Activated CD8-positive, alpha-beta memory T cell treated with anti-CD3 and anti-CD28 coated beads, Interleukin-2, amount 10 ng/mL, durations not matched to agents 7 days and 5 days (primary cell): ENCODE measurements at regions of chr11 and their contacts with region 1.

Region 1: DNA sequence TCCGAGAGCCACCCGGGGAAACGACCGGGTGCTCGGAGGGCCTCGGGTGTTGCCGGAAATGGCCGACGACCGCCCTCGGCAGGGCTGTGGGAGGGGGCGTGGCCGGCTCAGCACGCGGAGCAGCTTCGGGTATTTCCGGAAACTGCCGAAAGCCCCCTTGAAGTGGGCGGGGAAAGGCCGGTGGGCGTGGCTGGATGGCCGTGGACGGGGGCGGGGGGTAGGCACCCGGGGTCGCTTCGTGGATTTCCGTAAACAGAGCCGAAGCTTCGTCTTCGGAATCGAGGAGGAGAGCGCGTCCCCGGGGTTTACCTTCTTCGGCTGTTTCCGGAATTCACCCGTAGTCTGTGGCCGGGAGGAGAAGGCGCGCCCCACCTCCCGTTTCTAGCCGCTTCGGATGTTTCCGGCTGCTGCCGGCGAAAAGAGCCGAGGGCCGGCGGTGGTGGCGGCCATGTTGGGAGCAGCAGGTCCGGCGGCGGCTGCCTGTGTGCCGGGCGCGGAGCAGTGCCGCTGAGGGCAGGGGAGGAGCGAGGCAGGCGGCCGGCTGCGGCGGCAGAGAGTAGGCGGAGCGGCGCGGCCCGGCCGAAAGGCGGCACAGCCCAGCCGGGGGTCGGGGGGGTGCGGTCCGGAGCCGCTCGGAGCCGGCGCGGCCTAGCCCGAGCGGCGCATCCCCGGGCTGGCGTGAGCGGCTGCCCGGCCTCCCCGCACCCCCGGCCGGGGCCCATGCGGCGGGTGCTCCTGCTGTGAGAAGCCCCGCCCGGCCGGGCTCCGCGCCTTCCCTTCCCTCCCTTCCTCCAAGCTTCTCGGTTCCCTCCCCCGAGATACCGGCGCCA is at the start of gene MARK2:
- DNase-seq: peak; percentile 99
- ATAC-seq: peak; percentile 89
- H3K4me3 Mint-ChIP-seq: peak within 1 kb of the TSS; percentile 85
- H3K27ac Mint-ChIP-seq: peak within 1 kb of the TSS; percentile 88
- H3K4me1 Mint-ChIP-seq: peaks cover 55% of the 10 kb centered on the region
- H3K27me3 Mint-ChIP-seq: no peaks in the 10 kb centered on the region
- total RNA-seq, gene MARK2: 57.2 to 57.9 TPM

Region 2: DNA sequence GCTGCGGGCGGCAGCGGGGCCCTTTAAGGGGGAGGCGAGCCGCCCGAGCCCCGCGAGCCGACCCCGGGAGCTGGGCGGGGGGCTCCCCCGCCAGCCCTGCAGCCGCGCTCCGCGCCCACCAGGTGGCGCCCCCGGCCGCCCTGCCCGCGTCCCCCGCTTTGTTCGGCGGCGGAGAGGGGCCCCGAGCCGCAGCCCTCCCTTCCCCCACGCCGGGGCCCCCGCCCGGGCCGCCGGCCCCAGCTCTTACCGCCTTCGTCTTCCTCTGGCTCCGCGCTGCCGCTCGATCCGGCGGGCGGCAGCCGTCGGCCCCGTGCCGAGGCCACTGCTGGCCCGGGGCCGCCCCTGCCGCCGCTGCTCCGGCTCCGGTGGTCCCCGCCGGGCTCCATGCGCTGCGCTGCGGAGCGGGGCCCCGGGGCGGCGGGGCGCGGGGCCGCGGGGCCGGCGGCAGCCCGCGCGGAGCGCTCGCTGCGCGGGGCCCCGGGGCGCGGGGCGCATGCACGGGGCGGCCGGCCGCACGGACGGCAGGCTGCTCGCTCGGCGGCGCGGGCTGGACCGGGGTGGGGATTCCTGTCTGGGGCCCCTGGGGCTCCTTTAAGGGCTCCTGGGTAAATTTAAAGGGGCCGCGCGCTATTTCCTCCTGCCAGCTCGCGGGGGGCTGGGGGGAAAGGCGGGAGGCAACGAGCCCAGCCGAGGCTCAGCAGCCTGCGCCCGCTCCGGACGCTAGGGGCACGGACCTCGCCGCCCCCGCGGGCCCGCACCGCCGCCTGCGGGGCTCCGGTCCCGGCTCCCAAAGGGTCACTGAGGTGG is 70.5 kb before region 1 on chr11 and contains the start of gene ZFTA:
- CTCF ChIA-PET with region 1: interaction called, 19 read pairs
- DNase-seq: peak; percentile 61
- ATAC-seq: peak; percentile 68
- H3K4me3 Mint-ChIP-seq: peak within 1 kb of the TSS; percentile 87
- H3K27ac Mint-ChIP-seq: peak within 1 kb of the TSS; percentile 70
- H3K4me1 Mint-ChIP-seq: peaks cover 15% of the 10 kb centered on the region
- H3K27me3 Mint-ChIP-seq: peaks cover 29% of the 10 kb centered on the region
- total RNA-seq, gene ZFTA: 2.6 to 4.2 TPM

Region 3: DNA sequence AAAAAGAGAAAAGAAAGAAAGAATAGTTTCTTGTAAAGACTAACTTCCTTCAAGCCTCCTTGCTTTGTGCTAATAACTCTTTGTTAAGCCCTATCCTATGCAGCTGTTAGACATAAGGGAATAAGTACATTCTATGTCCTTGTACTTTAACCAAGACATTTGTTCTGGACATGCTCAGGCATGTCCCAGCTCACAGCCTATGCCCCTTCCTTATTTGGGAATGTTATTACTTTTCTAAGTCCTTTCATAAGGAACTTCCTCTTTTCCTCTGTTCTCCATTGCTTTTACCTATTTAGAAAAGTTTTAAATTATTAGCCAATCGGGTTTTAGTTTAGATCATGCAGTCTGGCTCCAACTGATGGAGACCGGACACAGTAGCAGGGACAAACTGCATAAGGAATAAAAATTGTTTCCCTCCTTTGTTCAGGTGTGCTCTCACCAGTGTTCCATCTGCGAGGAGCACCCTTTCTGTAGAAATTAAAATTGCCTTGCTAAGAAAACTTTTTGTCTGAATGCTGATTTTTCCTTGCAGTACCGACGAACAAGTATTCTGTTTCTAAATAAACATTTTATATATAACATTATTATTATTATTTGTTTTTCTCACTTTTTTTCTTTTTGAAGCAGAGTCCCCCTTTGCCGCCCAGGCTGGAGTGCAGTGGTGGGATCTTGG is 47.3 kb before region 1 on chr11:
- CTCF ChIA-PET with region 1: no interaction called
- DNase-seq: no peak
- ATAC-seq: no peak
- H3K4me3 Mint-ChIP-seq: no peak overlapping the region
- H3K27ac Mint-ChIP-seq: no peak overlapping the region
- H3K4me1 Mint-ChIP-seq: no peaks in the 10 kb centered on the region
- H3K27me3 Mint-ChIP-seq: peaks cover 6% of the 10 kb centered on the region

Region 4: DNA sequence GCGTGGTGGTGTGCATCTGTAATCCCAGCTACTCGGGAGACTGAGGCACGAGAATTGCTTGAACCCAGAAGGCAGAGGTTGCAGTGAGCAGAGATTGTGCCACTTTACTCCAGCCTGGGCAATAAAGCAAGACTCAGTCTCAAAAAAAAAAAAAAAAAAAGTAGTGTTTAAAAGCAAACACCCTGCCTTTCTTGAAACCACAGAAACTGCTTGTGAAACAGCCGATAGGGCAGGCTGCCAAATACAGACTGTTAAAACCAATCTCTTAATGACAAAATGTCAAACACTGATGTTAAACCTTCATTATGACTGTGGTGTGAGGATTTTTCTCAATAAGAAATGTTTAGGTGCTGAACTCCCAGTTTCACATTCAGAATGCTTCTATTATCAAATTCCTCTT is 27.3 kb after region 1 on chr11:
- CTCF ChIA-PET with region 1: interaction called, 44 read pairs
- DNase-seq: peak; percentile 89
- ATAC-seq: peak; percentile 80
- H3K4me3 Mint-ChIP-seq: peak overlapping the region; percentile 30
- H3K27ac Mint-ChIP-seq: peak overlapping the region; percentile 71
- H3K4me1 Mint-ChIP-seq: peaks cover 76% of the 10 kb centered on the region
- H3K27me3 Mint-ChIP-seq: no peaks in the 10 kb centered on the region

Region 5: DNA sequence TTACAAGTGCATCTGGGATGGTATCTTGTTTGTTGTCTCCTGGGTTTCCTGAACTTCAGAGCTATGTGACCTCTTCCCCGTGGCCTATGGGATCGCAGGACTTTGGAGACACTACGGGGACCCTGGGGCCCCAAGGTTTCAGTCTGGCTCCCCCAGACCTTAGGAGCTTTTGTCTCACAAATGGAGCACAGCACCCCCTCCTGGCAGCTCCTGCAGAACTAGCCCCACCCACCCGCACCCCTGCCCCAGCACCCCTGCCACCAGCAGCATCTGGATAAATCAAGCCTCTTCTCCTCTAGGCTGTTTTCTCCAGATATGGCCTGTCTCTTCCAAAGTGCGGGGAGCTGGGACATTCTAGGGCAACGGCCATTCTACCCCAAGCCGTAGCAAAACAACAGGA is 67.7 kb after region 1 on chr11:
- CTCF ChIA-PET with region 1: interaction called, 36 read pairs
- DNase-seq: peak; percentile 55
- ATAC-seq: peak; percentile 44
- H3K4me3 Mint-ChIP-seq: no peak overlapping the region
- H3K27ac Mint-ChIP-seq: no peak overlapping the region
- H3K4me1 Mint-ChIP-seq: no peaks in the 10 kb centered on the region
- H3K27me3 Mint-ChIP-seq: no peaks in the 10 kb centered on the region

Region 6: GRCh38 chr11:63945477-63946163 is 106.7 kb after region 1 on chr11:
- CTCF ChIA-PET with region 1: interaction called, 136 read pairs
- DNase-seq: peak; percentile 68
- ATAC-seq: peak; percentile 76
- H3K4me3 Mint-ChIP-seq: no peak overlapping the region
- H3K27ac Mint-ChIP-seq: no peak overlapping the region
- H3K4me1 Mint-ChIP-seq: peaks cover 21% of the 10 kb centered on the region
- H3K27me3 Mint-ChIP-seq: no peaks in the 10 kb centered on the region

Region 7: GRCh38 chr11:64000026-64000739 is 161.3 kb after region 1 on chr11:
- CTCF ChIA-PET with region 1: interaction called, 15 read pairs
- DNase-seq: peak; percentile 77
- ATAC-seq: peak; percentile 89
- H3K4me3 Mint-ChIP-seq: no peak overlapping the region
- H3K27ac Mint-ChIP-seq: no peak overlapping the region
- H3K4me1 Mint-ChIP-seq: peaks cover 5% of the 10 kb centered on the region
- H3K27me3 Mint-ChIP-seq: peaks cover 7% of the 10 kb centered on the region

Region 8: DNA sequence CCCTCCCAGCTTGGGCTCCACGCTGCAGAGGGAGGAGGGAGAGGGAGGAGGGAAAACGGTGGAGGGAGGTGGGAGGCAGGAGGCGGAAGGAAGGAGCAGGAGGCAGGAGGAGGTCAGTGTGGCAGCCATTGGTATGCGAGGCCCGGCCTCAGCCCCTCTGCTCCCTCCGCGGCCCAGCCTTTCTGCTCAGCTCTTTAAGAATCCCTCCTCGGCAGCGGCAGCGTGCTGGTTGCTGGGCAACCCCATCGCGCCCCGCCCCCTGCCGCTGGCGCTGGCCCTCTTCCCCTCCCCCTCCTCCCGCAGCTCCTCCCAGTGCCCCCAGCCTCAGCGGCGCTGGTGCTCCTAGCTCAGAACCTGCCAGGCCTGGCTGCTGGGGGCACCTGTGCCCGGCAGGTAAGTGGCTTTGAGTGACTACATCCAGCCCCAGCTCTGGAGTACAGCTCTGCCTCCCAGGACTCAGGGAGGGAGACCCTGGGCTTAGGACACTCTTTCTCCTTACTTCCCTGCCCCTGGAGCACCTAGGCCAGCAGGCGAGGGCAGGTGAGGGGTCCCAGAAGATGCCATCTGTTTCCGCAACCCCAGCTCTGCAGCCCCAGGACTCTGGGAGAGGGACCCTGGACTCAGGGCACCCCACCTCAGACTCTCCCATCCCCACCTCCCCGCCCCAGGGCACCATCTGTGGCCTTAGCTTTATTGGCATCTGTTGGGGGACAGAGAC is 189.7 kb after region 1 on chr11:
- CTCF ChIA-PET with region 1: no interaction called
- DNase-seq: no peak
- ATAC-seq: no peak
- H3K4me3 Mint-ChIP-seq: no peak overlapping the region
- H3K27ac Mint-ChIP-seq: no peak overlapping the region
- H3K4me1 Mint-ChIP-seq: no peaks in the 10 kb centered on the region
- H3K27me3 Mint-ChIP-seq: peaks cover 17% of the 10 kb centered on the region

Region 9: GRCh38 chr11:64094463-64095260 is 255.8 kb after region 1 on chr11:
- CTCF ChIA-PET with region 1: no interaction called
- DNase-seq: no peak
- ATAC-seq: no peak
- H3K4me3 Mint-ChIP-seq: no peak overlapping the region
- H3K27ac Mint-ChIP-seq: no peak overlapping the region
- H3K4me1 Mint-ChIP-seq: peaks cover 6% of the 10 kb centered on the region
- H3K27me3 Mint-ChIP-seq: no peaks in the 10 kb centered on the region